Posterior vena cava (tissue), 2 donors: ENCODE measurements at regions of chr19 and their contacts with region 1.

Region 1: DNA sequence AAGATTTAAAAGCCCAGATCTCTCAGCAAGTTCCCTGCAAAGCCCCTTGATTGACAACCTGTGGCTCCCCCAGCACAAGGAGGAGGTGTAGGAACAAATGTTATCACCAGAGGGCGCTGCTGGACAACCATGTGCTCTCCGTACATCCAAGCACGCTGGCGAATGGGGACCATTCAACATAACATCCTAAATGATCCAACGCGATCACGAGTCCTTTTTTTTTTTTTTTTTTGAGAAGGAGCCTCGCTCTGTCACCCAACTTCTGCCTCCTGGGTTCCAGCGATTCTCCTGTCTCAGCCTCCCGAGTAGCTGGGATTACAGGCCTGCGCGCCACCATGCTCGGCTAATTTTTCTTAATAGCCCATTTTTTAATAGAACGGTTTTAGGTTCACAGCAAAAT is 52.0 kb downstream of the NWD1 start:
- DNase-seq: peak; percentile 85

Region 2: GRCh38 chr19:16795721-16796120 is 24.1 kb after region 1 on chr19:
- intact Hi-C with region 1: no loop called
- DNase-seq: no peak

Region 3: DNA sequence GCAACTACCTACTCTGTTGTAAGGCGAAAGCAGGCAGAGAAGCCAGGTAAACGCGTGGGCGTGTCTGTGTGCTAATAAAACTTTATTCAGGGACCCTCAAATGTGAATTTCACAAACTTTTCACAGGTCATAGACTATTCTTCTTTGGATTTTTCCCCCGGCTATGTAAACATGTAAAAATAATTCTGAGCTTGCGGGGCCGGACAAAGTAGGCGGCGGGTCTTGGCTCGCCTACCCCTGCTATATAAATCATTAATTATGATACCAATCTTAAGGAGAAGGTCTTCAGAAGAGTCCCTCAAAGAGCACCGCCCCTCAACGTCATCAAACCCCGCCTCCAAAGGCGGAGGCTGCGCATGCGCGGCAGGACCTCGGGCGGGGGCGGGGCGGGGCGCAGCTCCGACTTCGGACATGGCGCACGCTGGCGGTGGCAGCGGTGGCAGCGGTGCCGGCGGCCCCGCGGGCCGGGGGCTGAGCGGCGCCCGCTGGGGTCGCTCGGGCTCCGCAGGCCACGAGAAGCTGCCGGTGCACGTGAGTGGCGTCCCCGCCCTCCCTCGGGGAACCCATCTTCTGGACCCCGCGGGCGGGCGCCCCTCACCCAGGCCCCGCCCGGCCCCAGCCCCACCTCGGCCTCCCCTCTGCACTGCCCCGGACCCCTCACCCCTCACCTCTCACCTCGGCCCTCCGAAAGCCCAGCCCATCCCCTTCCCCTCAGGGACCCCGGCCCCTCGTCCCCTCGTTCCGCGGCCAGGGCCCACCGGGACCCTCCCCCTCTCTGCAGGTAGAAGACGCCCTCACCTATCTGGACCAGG is 57.6 kb after region 1 on chr19 and contains the start of gene SIN3B:
- intact Hi-C with region 1: loop called in 1 of 2 experiments (anchors 10 kb)
- DNase-seq: peak; percentile 95
- total RNA-seq, gene SIN3B: 34.6 to 36.5 TPM

Region 4: DNA sequence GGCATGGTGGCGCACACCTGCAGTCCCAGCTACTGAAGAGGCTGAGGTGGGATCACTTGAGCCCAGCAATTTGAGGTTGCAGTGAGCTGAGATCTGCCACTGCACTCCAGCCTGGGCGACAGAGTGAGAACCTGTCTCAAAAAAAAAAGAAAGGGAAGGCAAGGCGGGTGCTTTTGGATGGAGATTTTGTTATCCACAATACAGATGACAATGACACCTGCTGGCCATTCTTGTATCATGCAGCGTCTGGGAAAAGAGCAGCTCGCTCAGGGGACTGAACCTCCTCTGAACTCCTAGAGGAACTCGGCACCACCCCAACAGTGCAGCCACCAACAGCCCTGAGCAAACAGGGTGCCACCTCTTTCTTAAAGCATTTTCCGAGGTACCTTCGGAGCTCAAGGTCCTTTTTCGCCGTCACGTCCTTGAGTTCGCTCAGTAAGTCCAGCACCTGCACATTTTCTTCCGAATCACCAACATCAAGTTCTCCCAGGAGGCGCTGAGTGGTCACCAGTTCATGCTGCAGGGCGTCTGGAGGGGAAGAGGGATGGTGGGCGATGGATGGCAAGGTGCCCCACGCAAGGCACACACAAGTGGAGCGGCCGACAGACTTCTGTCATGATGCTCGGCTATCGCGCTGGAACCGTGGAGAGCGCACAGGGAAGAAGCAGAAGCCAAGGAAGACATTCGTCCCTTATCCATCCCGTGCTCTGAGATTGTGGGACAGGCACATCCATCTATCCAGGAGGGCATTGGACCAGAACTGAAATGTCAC is 281.0 kb after region 1 on chr19:
- intact Hi-C with region 1: loop called (anchors 5 kb)
- DNase-seq: no peak